Motor neuron (in vitro differentiated cells): ENCODE measurements at regions of chr11 and their contacts with region 1.

Region 1: GRCh38 chr11:73184953-73185671 is 33.0 kb upstream of the P2RY2 start:
- ATAC-seq: peak; percentile 39 to 99 (median 75)
- H3K4me3 ChIP-seq: no peak overlapping the region
- H3K27ac ChIP-seq: no peak overlapping the region
- H3K4me1 ChIP-seq: no peaks in the 10 kb centered on the region

Region 2: DNA sequence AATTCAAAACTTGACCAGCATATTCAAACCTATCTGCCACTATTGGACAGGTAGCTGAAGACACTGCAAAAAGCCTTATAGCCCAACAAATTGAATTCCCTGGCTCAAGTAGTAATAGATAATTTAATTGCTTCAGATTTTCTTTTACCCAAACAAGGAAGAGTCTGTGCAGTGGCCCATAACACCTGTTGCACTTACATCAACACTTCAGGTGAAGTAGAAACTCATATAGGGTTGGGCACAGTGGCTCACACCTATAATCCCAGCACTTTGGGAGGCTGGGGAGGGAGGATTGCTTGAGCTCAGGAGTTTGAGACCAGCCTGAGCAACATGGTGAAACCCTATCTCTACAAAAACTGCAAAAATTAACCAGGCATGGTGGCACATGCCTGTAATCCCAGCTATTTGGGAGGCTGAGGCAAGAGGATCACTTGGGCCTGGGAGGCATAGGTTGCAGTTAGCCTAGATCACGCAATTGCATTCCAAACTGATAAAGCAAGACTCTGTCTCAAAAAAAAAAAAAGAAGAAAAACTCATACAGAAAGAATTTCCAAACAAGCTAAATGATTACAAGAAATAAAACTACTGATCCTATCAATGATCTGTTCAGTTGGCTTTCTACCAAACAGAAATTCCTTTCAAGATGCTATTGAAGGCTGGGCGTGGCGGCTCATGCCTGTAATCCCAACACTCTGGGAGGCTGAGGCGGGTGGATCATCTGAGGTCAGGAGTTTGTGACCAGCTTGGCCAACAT is 1040.1 kb before region 1 on chr11:
- in situ Hi-C with region 1: no loop called
- ATAC-seq: peak in 2 of 8 experiments; percentile 43 to 63
- H3K4me3 ChIP-seq: no peak overlapping the region
- H3K27ac ChIP-seq: no peak overlapping the region
- H3K4me1 ChIP-seq: no peaks in the 10 kb centered on the region

Region 3: GRCh38 chr11:73072901-73073481 is 112.1 kb before region 1 on chr11:
- in situ Hi-C with region 1: no loop called
- ATAC-seq: peak in 4 of 8 experiments; percentile 53 to 99 (median 56)
- H3K4me3 ChIP-seq: no peak overlapping the region
- H3K27ac ChIP-seq: no peak overlapping the region
- H3K4me1 ChIP-seq: no peaks in the 10 kb centered on the region

Region 4: GRCh38 chr11:73229896-73230875 is 45.1 kb after region 1 on chr11:
- in situ Hi-C with region 1: loop called in 2 of 9 experiments (anchors 5 to 10 kb)
- ATAC-seq: no peak
- H3K4me3 ChIP-seq: no peak overlapping the region
- H3K27ac ChIP-seq: no peak overlapping the region
- H3K4me1 ChIP-seq: peaks cover 4 to 6% of the 10 kb centered on the region in 2 donors

Region 5: DNA sequence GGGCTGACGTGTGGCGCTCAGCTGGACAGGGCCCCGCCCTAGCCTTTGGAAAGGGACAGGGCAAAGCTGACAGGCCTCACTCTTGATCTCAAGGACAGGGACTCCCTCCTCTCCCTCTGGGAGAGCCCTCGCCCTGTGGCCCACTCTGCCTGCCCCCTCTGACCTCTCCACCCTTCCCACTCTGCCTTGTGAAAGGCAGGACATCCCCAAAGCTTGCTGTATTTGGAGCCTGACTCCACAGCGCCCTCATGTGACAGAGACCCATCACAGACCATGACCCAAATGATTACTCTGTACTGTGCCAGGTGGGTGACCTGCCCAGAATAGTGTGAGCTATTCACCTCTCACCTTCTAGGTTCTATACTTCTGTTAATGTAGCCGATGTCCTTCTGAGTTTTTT is 51.7 kb after region 1 on chr11:
- in situ Hi-C with region 1: loop called in 3 of 9 experiments (anchors 5 to 10 kb)
- ATAC-seq: peak in 6 of 8 experiments; percentile 32 to 78 (median 55)
- H3K4me3 ChIP-seq: no peak overlapping the region
- H3K27ac ChIP-seq: no peak overlapping the region
- H3K4me1 ChIP-seq: no peaks in the 10 kb centered on the region

Region 6: DNA sequence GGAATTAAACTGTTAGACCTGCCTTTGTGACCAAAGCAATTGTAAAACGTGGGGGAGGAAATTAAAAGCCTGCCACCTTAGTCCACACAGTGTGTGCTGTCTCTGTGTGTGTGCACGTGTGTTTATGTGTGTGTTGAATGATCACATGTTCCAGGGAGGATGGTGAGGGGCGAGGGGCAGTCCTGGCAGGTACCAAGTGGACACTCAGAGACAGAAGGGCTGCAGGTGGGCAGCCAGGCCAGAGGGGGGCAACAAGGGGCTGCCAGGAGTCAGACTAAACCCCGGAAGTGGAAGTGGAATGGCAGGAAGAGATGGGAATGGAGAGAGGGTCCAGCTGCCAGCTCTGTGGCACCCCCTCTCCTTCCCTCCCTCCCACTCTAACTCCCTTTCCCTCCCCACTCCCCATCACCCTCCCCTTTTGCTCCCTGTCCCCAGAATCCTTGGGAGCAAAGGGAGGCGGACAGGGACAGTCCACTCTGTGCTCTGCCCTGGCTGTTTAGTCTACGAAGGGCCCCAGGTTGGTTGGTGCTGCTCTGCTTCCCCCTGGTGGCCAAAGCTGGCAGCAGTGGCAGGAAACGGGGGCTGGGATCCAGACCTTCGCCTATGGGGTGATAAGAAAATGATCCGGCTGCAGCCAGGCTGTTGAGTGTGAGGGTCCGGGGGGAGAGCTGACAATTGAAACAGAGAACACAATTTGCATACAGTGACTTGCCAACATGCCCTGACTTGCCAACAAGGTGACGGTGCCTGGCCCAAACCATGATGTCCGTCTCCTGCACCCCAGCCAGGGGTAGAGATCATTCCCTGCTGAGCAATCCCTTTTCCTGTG is 57.4 kb after region 1 on chr11:
- in situ Hi-C with region 1: loop called in 2 of 9 experiments (anchors 10 kb)
- ATAC-seq: peak; percentile 85 to 94 (median 90)
- H3K4me3 ChIP-seq: peak overlapping the region in 2 of 5 donors; percentile 5 to 25
- H3K27ac ChIP-seq: no peak overlapping the region
- H3K4me1 ChIP-seq: peaks cover 10 to 14% of the 10 kb centered on the region in 2 donors